ENCODE measurements at regions of chr16 and their contacts with region 1.

Region 1: DNA sequence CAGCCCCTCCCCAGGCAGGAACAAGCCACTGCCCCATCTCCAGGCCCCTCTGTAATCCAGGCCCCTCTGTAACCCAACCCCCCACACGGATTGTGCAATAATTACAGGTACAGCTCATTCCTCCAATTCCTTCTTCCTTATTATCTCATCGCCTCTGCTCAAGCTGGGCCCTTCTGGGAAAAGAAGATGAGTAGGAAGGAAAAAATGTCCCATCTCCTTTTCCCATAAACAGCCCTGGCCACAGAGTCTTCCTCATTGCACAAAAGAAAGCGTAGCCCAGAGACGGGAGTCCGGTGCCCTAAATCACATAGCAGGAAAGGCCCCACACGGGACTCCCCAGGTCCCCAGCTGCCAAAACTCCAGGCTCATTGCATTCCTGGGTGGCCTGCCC is 3.6 kb upstream of the LITAFD start:
- DNase-seq: no peak
- H3K4me3 ChIP-seq: no peak overlapping the region
- H3K27ac ChIP-seq: no peak overlapping the region
- H3K27me3 ChIP-seq: no peaks in the 10 kb centered on the region
- CTCF ChIP-seq: no peak

Region 2: DNA sequence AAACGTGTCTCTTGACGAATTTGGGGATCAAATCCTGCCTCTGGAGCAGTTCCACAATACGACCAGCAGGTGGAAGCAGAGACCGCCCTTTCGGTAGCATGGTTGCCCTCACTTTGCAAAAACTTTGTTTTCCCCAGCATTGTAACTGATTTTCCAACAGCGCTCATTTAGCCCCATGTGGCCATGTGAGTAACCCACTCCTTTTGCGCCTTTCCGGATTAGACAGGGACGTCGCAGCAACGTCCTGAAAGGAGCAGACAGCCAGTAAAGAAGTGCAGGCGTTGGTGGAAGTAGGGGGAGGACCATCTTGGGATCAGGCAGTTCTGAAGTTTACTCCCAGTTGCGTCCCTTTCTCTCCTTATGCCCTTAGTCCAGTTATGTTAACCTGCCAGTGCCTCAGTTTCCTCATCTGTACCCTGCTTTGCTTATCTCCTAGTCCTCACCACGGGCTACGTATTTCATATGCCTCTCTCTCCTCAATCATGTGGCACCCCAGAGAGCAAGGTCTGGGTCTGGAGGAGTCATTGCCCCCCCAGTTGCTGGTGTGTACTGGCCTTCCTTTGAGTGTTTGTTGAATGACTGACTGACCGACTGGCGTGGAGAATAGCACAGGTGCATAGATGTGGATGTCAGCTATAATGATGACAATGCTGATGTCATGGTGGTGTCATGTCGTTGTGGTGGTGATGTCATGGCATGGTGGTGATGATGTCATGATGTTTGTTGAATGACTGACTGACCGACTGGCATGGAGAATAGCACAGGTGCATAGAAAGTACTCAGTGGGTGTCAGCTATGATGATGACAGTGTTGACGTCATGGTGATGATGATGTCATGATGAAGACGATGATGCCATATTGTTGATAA is 310.5 kb before region 1 on chr16:
- intact Hi-C with region 1: loop called (anchors 2 to 5 kb)
- DNase-seq: peak; percentile 45 to 81 (median 67)
- H3K4me3 ChIP-seq: no peak overlapping the region
- H3K27ac ChIP-seq: no peak overlapping the region
- H3K27me3 ChIP-seq: no peaks in the 10 kb centered on the region
- CTCF ChIP-seq: peak; percentile 97 to 100 (median 99)

Region 3: GRCh38 chr16:8660841-8661301 is 217.6 kb before region 1 on chr16:
- intact Hi-C with region 1: loop called (anchors 5 kb)
- DNase-seq: peak in 9 of 10 donors; percentile 45 to 82 (median 67)
- H3K4me3 ChIP-seq: peak overlapping the region in 2 of 59 donors; percentile 9 to 39
- H3K27ac ChIP-seq: no peak overlapping the region
- H3K27me3 ChIP-seq: no peaks in the 10 kb centered on the region
- CTCF ChIP-seq: peak; percentile 41 to 87 (median 68)

Region 4: DNA sequence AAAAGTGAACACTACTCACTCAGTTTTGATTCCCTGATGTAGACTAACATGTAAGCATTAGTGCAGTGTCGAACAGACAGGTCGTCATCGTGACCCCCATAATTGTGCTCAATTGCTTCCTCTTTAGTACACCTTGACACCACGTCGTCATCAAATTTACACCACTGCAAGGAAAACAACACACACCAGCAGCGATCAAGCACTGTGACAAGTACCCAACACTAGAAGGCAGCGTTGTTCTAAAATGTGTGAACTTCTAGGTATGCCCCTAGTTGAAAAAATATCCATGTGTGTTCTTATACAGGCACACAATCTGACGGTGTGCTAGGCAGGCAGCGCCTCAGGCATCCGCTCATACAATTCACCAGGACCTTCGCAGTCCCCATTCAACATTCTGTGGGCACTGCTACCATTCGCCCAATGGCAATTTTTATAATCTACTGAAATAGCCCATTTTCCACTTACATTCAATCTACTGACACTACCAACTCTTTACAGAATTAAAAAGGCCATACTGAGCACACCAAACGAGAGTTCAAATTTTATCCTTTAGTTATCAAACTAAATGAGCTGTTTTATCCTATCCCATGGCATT is 26.7 kb after region 1 on chr16:
- intact Hi-C with region 1: no loop called
- DNase-seq: no peak
- H3K4me3 ChIP-seq: no peak overlapping the region
- H3K27ac ChIP-seq: no peak overlapping the region
- H3K27me3 ChIP-seq: no peaks in the 10 kb centered on the region
- CTCF ChIP-seq: peak in 30 of 56 donors; percentile 11 to 42 (median 22)

Measured in dorsolateral prefrontal cortex (tissue), 120 donors.